Dorsolateral prefrontal cortex (tissue), 120 donors: ENCODE measurements at regions of chr3 and their contacts with region 1.

Region 1: GRCh38 chr3:185937689-185938463 is at the start of gene TRA2B:
- DNase-seq: peak; percentile 98 to 100 (median 99)
- H3K4me3 ChIP-seq: peak within 1 kb of the TSS; percentile 43 to 100 (median 97)
- H3K27ac ChIP-seq: peak within 1 kb of the TSS; percentile 86 to 100 (median 99)
- H3K27me3 ChIP-seq: no peaks in the 10 kb centered on the region
- CTCF ChIP-seq: peak in 52 of 56 donors; percentile 2 to 65 (median 44)
- total RNA-seq, gene TRA2B: 66.0 to 127 (median 89.1) TPM

Region 2: DNA sequence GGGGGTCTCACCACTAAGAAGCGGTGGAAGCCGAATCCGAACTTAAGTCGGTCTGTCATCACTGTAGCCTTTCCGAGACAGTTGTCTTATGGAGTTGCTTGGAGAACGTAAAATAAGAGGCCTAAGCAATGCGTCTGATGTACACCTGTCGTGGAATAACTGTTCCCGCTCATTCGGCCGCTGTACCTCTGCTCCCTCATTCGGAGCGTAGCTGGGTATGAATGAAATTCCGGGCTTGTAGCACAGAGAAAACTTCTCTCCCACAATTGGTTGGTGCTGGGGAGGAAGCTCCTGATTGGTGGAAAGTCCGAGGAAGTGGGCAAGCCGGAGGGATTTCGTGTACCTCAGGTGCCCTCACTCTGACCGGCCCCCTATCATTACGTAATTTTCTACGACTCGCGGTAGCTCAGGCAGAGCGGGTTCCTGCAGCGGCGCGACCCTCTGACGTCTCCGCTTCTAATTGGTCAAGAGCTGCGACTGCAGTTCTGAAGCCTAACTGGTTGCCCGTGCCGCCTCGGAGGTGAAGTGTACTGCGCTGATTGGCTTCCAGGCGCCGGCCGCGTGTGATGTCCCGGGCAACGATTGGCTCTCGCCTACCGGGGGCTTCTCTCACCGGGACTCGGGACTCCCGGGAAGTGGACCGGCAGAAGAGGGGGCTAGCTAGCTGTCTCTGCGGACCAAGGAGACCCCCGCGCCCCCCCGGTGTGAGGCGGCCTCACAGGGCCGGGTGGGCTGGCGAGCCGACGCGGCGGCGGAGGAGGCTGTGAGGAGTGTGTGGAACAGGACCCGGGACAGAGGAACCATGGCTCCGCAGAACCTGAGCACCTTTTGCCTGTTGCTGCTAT is 632.4 kb after region 1 on chr3 and contains the start of gene DNAJB11:
- intact Hi-C with region 1: loop called in 1 of 2 experiments (anchors 5 kb)
- DNase-seq: peak; percentile 99 to 100 (median 100)
- H3K4me3 ChIP-seq: peak within 1 kb of the TSS; percentile 52 to 99 (median 92)
- H3K27ac ChIP-seq: peak within 1 kb of the TSS in 56 of 59 donors; percentile 25 to 97 (median 78)
- H3K27me3 ChIP-seq: no peaks in the 10 kb centered on the region
- CTCF ChIP-seq: peak in 25 of 56 donors; percentile 7 to 55 (median 28)
- total RNA-seq, gene DNAJB11: 13.8 to 50.8 (median 25.0) TPM

Region 3: DNA sequence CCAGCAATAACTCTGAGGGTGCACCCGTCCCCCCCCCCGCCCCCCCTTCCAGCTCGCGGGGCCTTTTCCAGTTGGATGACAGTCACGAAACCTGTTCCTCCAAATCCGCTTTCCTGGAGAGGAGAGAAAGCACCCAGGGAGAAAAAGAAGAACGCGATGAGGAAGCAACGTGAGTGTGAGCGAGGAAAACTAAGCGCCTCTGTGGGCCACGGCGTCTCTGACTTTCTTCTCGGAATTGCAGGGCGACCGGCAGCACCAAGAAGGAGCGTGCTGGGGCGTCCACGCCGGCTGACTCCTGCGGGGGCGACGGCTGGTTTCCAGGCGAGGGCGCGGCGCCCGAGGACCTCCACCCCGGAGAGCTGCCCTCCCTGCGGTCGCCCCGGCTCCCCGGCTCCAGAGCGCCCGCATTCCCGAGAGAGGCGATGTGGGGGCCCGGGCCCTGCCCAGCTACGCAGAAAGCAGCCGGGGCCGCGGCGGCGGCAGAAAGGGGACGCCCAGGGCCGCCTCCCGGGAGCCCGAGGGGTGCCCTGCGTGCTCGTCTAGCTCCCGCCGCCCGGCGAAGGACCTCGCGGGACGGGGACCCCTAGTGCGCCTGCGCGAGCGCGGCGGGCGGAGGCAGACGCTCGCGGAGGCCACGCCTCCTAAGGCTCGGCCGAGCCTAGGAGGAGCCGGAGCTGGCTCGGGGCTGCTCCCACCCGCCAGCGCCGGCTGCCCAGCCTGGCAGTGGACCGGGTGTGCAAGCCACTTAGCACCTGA is 889.3 kb after region 1 on chr3:
- intact Hi-C with region 1: loop called in 1 of 2 experiments (anchors 10 kb)
- DNase-seq: peak; percentile 50 to 91 (median 72)
- H3K4me3 ChIP-seq: peak overlapping the region; percentile 41 to 92 (median 72)
- H3K27ac ChIP-seq: peak overlapping the region in 49 of 59 donors; percentile 19 to 87 (median 74)
- H3K27me3 ChIP-seq: peaks cover 0 to 22% (median 0%) of the 10 kb centered on the region in 45 donors
- CTCF ChIP-seq: peak in 28 of 56 donors; percentile 8 to 52 (median 30)